CD4-positive, alpha-beta memory T cell (primary cell): ENCODE measurements at regions of chr1 and their contacts with region 1.

Region 1: DNA sequence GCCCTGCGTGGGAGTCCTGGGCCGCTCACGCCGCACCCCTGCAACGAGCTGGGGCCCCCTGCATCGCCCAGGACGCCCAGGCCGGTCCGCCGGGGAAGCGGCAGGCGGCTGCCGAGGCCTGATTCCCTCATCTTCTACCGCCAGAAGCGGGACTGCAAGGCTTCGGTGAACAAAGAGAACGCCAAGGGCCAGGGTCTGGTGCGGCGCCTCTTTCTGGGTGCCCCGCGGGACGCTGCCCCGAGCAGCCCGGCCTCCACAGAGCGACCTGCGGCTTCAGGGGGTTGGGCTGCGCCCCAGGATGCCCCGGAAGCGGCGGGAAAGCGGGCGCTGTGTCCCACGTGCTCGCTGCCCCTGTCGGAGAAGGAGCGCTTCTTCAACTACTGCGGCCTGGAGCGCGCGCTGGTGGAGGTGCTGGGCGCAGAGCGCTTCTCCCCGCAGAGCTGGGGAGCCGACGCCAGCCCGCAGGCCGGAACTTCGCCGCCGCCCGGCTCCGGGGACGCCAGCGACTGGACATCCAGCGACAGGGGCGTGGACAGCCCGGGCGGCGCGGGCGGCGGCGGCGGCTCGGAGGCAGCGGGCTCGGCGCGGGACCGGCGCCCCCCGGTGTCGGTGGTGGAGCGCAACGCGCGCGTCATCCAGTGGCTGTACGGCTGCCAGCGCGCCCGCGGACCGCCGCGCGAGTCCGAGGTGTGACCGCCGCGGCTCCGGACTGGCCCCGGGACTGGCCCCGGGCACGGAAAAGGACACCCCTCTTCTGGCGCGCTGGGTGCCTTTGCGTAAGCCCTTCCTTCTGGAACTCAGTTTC is 2.7 kb downstream of the FAM110D start:
- DNase-seq: peak in 4 of 5 donors; percentile 20 to 35 (median 26)
- H3K4me3 ChIP-seq: no peak overlapping the region
- H3K4me3 Mint-ChIP-seq: peak overlapping the region in 7 of 8 donors; percentile 40 to 74 (median 59)
- H3K27ac ChIP-seq: no peak overlapping the region
- H3K27ac Mint-ChIP-seq: no peak overlapping the region
- H3K4me1 ChIP-seq: peaks cover 16% of the 10 kb centered on the region
- H3K4me1 Mint-ChIP-seq: peaks cover under 1 to 11% (median 8%) of the 10 kb centered on the region in 4 donors
- H3K27me3 ChIP-seq: peaks cover 7% of the 10 kb centered on the region
- H3K27me3 Mint-ChIP-seq: peaks cover 14 to 27% of the 10 kb centered on the region in 2 donors

Region 2: DNA sequence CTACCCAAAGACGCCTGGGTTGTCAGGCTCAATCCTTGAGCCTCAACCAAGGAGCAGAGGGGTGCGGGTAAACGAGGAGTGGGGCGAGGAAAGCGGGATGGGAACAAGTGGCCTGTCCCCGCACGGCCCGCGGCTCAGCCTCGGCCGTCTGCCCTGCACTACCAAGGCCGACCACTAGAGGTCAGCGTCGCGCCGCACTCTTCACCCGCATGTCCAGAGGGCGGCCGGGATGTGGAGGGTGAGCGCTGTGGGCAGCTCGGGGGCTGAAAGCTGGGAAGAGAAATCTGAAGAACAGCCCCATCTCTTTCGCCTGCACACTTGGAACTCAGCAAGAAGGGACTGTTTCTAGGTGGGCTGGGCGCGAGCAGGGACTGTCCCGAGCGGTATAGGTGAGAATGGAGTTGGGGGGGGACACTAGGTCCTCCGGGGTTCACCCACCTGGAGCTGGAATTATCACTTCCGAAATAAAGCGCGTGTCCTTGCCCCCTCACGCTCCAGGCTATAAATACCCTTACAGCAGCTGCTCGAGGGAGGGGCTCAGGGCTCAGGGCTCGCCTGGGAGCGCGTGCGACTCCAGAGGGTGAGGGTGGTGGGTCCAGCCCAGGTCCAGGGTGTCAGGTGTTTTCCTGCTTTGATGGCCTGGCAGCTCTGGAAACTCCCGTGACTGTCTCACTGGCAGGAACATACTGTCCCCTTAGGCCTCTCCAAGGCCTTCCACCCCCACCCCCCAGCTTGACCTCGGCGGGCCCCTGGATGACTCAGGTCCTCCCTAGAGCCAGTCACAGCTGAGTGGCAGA is 125.5 kb before region 1 on chr1:
- CTCF ChIA-PET with region 1: interaction called, 10 read pairs
- POLR2A ChIA-PET with region 1: no interaction called
- intact Hi-C with region 1: loop called (anchors 1 kb)
- DNase-seq: peak; percentile 67 to 81 (median 69)
- H3K4me3 ChIP-seq: peak overlapping the region; percentile 48 to 84
- H3K4me3 Mint-ChIP-seq: peak overlapping the region; percentile 94 to 99 (median 95)
- H3K27ac ChIP-seq: peak overlapping the region; percentile 77
- H3K27ac Mint-ChIP-seq: peak overlapping the region; percentile 89 to 97 (median 95)
- H3K4me1 ChIP-seq: peaks cover 15% of the 10 kb centered on the region
- H3K4me1 Mint-ChIP-seq: peaks cover 2 to 21% (median 11%) of the 10 kb centered on the region in 4 donors
- H3K27me3 ChIP-seq: no peaks in the 10 kb centered on the region
- H3K27me3 Mint-ChIP-seq: peaks cover 2 to 3% of the 10 kb centered on the region in 2 donors